GM12878 (cell line): ENCODE measurements at regions of chr14 and their contacts with region 1.

Region 1: DNA sequence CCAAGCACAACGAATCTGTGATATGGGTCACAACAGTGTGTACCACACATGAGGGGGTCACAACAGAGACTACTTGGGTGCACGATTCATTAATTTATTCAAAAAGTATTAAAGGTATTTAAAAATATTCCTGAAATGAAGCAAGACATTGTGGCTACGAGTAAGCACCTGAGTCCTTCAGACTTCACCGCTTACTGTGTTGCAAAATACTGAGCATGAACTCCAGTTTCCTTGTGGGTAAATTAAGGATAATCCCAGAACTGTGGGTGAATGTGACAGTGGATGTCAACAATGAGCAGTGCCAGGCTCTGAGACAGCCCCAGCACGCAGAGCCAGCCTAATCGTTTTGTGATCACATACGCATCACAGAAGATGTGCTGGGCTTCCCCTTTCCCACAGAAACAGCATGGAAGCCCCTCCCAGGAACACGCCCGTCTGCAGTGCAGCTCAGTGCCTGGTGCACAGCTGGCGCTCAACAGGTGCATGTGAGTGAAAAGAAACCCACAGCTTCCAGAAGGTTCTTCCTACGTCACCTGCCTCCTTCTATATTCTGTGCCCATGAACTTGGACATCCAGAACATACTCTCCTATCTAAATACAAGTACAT is 29.1 kb downstream of the CDC42BPB start:
- DNase-seq: no peak
- ATAC-seq: no peak
- H3K4me3 ChIP-seq: no peak overlapping the region
- H3K27ac ChIP-seq: no peak overlapping the region
- H3K4me1 ChIP-seq: 0 out of 2 replicates have a peak, but pooled peaks cover 3% of the 10 kb centered on the region
- H3K27me3 ChIP-seq: no peaks in the 10 kb centered on the region
- CTCF ChIP-seq: no peak
- EP300 ChIP-seq: no peak
- POLR2A ChIP-seq: no peak
- RAD21 ChIP-seq: no peak

Region 2: DNA sequence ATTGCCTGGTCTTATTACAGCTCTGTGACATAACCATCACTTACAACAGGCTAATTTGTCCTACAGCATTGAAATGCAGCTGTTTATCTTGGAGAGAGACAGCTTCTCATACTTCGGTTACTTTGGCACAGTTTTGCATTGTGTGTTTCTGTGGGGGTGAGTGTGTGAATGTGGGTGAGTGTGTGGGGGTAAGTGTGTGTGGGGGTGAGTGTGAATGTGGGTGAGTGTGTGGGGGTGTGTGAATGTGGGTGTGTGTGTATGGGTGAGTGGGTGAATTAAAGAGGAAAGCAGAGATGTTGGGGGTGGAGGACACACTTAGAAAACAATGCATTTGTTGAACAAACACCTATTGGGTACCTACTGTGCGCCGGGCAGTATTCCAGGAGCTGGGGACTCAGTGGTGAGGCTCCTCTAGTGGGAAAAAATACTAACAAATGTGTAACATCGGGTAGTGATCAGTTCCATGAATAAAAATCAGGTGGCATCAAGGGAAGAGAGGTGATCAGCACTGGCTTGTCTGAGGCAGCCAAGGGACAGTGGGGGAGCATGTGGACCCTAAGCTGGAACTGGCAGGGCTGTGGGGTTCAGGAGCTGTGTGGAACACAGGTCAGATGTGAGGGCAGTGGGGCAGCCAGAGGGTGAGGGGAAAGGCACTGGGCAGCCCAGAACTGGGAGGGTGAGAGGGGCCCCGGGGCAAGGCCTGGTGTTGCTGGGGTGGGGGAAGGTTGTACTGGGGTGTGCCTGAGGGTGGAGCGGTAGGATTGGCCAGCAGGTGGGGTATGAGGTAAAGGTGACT is 149.9 kb before region 1 on chr14:
- CTCF ChIA-PET with region 1: no interaction called
- POLR2A ChIA-PET with region 1: no interaction called
- RAD21 ChIA-PET with region 1: no interaction called
- SMC1A ChIA-PET with region 1: no interaction called
- in situ Hi-C with region 1: no loop called
- intact Hi-C with region 1: no loop called
- DNase-seq: no peak
- ATAC-seq: peak; percentile 74
- H3K4me3 ChIP-seq: no peak overlapping the region
- H3K27ac ChIP-seq: no peak overlapping the region
- H3K4me1 ChIP-seq: no peaks in the 10 kb centered on the region
- H3K27me3 ChIP-seq: no peaks in the 10 kb centered on the region
- CTCF ChIP-seq: peak; percentile 6 to 19 (median 14); a peak in 3 of 6 replicates
- EP300 ChIP-seq: no peak
- POLR2A ChIP-seq: peak; percentile 64
- RAD21 ChIP-seq: no peak

Region 3: DNA sequence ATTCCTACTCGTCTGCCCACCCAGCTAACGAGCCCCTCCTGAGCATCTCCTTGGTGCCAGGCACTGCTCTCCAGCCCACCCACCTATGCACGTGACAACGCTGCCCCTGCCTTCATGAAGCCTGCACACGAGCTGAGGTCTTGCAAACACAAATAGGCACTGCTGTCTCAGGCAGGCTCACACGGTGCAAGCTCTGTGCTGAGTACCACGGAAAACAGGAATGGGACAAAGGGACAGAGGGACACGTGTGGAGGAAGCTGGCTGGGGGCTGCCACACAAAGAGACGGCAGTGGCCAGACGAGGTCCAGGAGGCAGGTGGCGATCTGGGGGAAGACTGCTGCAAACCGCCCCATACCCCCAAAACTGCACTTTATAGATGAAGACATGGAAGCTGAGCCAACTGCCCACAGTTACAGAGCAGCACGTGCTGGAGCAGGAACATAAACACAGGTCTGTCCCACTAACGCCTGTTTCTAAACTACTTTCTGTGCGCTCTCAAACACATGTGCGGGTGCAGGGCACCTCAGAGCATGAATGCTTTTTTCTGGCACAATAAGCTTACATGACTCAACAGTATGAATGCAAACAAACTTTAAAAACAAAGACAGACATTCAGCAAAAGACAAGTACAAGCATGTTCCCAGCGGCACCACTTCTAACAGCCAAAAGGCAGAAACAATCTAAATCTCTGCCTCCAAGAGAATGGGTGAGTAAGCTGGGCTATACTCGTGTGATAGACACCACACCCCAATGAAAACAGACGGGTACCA is 41.3 kb before region 1 on chr14:
- CTCF ChIA-PET with region 1: no interaction called
- POLR2A ChIA-PET with region 1: no interaction called
- RAD21 ChIA-PET with region 1: no interaction called
- SMC1A ChIA-PET with region 1: no interaction called
- in situ Hi-C with region 1: no loop called
- intact Hi-C with region 1: no loop called
- DNase-seq: no peak
- ATAC-seq: no peak
- H3K4me3 ChIP-seq: no peak overlapping the region
- H3K27ac ChIP-seq: no peak overlapping the region
- H3K4me1 ChIP-seq: peaks cover 15% of the 10 kb centered on the region
- H3K27me3 ChIP-seq: no peaks in the 10 kb centered on the region
- CTCF ChIP-seq: no peak
- EP300 ChIP-seq: no peak
- POLR2A ChIP-seq: no peak
- RAD21 ChIP-seq: no peak

Region 4: DNA sequence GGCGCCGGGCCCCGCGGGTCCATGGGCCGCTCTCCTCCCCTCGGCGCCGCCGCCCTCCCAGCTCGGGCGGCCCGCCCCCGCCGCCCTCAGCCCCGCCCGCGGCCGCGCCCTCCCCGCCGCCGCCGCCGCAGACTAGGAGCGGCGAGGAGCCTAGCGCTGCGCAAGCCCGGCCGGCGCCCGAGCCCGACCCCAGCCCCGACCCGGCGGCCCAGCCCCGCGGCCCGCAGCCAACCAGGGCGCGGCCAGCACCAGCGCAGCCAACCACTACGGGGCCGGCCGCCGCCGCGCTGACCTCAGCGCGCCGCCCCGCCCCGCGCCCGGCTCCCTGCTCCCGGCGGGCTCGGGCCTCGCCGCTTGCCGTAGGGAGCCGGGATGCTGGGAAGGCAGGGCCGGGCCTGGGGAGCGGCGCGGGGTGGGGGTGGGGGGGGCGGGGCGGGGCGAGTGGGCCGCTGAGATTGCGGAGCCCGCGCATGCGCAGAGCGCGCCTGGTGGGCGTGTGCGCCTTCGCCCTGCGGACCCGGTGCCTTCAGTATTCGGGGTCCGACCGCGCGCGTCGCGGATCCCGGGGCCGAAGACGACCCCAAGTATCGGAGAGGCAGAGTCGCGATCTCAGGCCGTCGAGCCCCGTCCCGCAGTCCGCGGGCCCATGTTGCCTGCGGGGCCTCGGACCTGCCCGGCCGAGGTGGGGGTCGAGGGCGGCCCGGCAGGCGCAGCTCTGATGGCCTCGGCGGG is 29.3 kb after region 1 on chr14 and contains the start of gene CDC42BPB:
- CTCF ChIA-PET with region 1: no interaction called
- POLR2A ChIA-PET with region 1: interaction called, 5 read pairs
- RAD21 ChIA-PET with region 1: no interaction called
- SMC1A ChIA-PET with region 1: no interaction called
- in situ Hi-C with region 1: no loop called
- intact Hi-C with region 1: loop called (anchors 1 kb)
- DNase-seq: no peak
- ATAC-seq: peak; percentile 93
- H3K4me3 ChIP-seq: peak within 1 kb of the TSS; percentile 86
- H3K27ac ChIP-seq: peak within 1 kb of the TSS; percentile 22; the same call in 1 of the 2 replicates
- H3K4me1 ChIP-seq: peaks cover 2% of the 10 kb centered on the region
- H3K27me3 ChIP-seq: no peaks in the 10 kb centered on the region
- CTCF ChIP-seq: no peak
- EP300 ChIP-seq: no peak
- POLR2A ChIP-seq: no peak
- RAD21 ChIP-seq: no peak
- polyA plus RNA-seq, gene CDC42BPB: 0.42 to 0.46 TPM